ENCODE measurements at regions of chr9 and their contacts with region 1.

Region 1: DNA sequence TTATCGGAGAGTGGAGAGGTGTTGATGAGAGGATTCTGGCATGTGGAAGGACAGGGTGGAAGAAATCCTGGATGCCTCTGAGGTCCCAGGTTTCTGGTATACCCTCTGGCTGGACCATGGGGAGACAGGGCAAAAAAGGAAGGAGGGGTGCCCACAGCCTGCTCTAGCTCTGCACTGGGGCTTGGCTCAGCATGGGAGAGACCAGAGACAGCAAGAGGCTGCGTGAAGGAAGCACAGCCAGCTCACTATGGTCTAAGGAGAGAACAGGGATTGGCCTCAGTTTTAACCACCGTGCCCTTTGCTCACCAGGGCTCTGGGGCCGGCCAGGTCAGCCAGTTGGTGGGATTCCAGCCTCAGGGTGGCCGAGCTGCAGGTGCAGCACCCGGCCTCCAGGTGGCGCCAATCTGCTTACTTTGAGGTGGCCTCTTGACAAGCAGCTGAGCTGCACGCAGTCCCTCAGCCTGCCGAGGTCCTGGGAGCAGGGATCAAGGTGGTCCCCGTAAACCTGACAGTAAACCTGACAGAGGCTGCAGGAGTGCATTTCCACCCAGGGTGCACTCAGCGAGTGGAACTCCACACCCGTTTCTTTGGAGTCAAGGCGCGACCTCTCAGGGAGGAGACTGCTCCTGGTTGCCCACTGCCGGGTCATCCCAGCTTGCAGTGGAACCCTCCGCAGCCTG is 25.0 kb upstream of the SPTLC1 start:
- DNase-seq: peak; percentile 82 to 97
- H3K4me3 ChIP-seq: peak overlapping the region in 1 of 4 experiments; percentile 62; a peak in 2 of 8 replicates
- H3K27ac ChIP-seq: no peak overlapping the region
- H3K4me1 ChIP-seq: peaks cover 0 to 5% (median 4%) of the 10 kb centered on the region in 4 experiments; a peak in 4 of 7 replicates
- H3K27me3 ChIP-seq: peaks cover 3 to 26% (median 16%) of the 10 kb centered on the region in 4 experiments; a peak in 6 of 7 replicates
- CTCF ChIP-seq: peak; percentile 96 to 98 (median 98)
- EP300 ChIP-seq: no peak; a peak in 1 of 3 replicates
- POLR2A ChIP-seq: no peak
- RAD21 ChIP-seq: peak; percentile 83 to 92

Region 2: DNA sequence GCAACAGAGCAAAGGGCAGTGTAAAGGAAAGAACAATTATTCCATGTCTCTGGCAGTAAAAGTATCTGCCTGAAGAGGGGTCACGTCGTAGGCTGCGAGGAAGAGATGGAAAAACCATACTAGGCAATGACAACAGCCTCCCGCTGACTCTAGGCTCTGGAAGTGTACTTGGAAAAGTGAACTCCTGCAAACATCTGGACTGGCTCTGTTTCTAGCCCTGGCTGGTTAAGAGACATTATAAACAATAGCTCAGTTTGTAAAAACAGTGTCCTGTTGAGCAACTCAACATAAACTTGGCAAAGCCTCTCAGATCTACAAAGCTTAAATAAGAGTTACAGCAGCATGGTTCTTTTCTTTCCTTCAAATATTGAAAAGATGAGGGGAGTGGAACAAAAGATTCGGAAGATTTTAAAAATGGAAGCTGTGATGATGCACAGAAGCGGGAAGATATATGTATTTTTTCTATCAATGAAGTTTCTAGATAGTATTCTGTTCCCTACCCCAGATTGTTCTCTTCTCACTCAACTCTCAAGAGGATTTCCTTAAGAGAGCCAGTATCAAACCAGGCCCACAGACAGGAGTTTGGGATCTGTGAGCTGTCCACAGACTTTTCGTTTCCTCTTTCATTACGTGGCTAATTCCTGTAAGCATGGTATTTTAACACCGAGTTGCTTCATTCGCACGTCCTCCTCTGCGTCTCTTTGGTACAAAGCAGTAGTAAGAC is 104.4 kb before region 1 on chr9:
- CTCF ChIA-PET with region 1: no interaction called
- POLR2A ChIA-PET with region 1: no interaction called
- DNase-seq: no peak
- H3K4me3 ChIP-seq: no peak overlapping the region
- H3K27ac ChIP-seq: no peak overlapping the region
- H3K4me1 ChIP-seq: no peaks in the 10 kb centered on the region
- H3K27me3 ChIP-seq: no peaks in the 10 kb centered on the region
- CTCF ChIP-seq: no peak
- EP300 ChIP-seq: no peak
- POLR2A ChIP-seq: no peak
- RAD21 ChIP-seq: no peak

Region 3: DNA sequence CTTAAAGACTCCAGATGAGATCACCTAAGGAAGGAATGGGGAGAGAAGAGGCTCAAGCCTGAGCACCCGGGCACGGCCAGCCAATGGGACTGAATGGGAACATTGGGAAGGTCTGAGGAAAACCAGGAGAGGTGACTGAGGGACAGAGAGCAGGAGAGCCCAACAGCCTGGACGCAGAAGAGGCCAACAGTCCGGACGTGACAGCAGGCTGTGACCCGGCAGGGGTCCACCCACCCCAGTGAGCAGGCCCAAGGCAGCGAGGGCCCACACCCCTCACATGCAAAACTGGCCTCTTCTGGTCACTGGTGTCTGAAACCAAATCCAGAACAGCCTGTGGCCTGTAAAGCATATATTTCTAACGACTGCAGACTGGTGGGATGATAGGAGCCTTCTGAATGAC is 17.4 kb before region 1 on chr9:
- CTCF ChIA-PET with region 1: interaction called, 17 read pairs
- POLR2A ChIA-PET with region 1: interaction called, 3 read pairs
- DNase-seq: no peak
- H3K4me3 ChIP-seq: no peak overlapping the region
- H3K27ac ChIP-seq: no peak overlapping the region
- H3K4me1 ChIP-seq: no peaks in the 10 kb centered on the region; a peak in 1 of 7 replicates
- H3K27me3 ChIP-seq: no peaks in the 10 kb centered on the region; a peak in 2 of 7 replicates
- CTCF ChIP-seq: no peak
- EP300 ChIP-seq: no peak
- POLR2A ChIP-seq: no peak
- RAD21 ChIP-seq: no peak

Region 4: DNA sequence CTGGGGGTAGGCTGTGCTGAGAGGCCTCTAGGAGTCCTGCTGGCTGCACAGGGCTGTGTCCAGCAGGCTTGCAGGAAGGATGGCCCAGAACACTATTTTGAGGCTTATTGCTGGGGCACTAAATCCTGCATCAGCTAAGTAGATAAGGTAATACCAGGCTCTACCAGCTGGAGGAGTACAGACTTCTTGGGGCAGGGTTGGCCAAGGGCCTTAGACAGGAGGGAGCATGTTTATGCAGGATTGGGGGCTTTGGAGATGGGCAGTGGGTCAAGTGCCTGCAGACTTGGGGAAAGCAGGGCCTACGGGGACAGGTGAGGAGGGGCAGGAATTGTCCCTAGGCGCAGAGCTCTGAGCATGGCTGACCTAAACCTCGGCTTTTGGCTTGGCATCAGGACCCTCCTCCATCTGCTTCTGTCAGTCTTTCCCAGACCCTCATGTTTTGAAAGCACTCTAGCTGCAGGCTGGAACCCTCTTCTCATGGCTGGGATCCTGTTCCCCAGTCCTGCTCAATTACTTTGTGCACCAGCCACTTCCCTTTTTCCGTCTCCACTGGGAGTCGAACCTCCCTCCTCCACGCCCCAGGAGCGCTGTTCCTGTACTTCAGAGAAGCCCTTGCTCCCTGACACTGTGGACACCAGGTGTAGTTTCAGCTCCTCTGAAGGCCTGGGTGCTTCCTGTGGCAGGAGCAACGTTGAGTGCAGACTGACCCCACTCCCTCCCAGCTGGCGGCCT is 36.0 kb after region 1 on chr9:
- CTCF ChIA-PET with region 1: interaction called, 100 read pairs
- POLR2A ChIA-PET with region 1: no interaction called
- DNase-seq: no peak
- H3K4me3 ChIP-seq: no peak overlapping the region
- H3K27ac ChIP-seq: no peak overlapping the region
- H3K4me1 ChIP-seq: peaks cover 0 to 4% (median 0%) of the 10 kb centered on the region in 4 experiments; a peak in 1 of 7 replicates
- H3K27me3 ChIP-seq: no peaks in the 10 kb centered on the region
- CTCF ChIP-seq: peak; percentile 21 to 69 (median 40)
- EP300 ChIP-seq: no peak
- POLR2A ChIP-seq: no peak
- RAD21 ChIP-seq: peak; percentile 51 to 65

Region 5: GRCh38 chr9:92206488-92206887 is 66.3 kb after region 1 on chr9:
- CTCF ChIA-PET with region 1: interaction called, 40 read pairs
- POLR2A ChIA-PET with region 1: no interaction called
- DNase-seq: no peak
- H3K4me3 ChIP-seq: no peak overlapping the region
- H3K27ac ChIP-seq: no peak overlapping the region
- H3K4me1 ChIP-seq: no peaks in the 10 kb centered on the region
- H3K27me3 ChIP-seq: no peaks in the 10 kb centered on the region
- CTCF ChIP-seq: no peak
- EP300 ChIP-seq: no peak
- POLR2A ChIP-seq: no peak
- RAD21 ChIP-seq: no peak

Region 6: DNA sequence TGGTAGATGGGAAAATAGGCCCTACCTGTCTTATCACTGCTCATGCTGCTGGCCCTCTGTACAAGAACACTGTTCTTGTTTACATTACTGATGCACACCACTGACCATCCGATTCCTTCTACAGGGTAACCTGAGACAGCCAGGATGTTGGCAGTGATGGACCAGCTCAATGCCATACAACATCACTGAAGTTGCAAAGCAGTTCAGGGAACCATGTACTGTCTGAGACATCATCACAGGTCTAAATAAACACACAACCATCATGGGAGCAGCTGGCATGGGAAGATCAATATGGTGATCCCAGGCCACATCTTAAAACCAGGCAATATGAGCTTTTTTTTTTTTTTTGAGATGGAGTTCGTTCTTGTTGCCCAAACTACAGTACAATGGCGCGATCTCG is 94.3 kb after region 1 on chr9:
- CTCF ChIA-PET with region 1: interaction called, 116 read pairs
- POLR2A ChIA-PET with region 1: interaction called, 8 read pairs
- DNase-seq: no peak
- H3K4me3 ChIP-seq: no peak overlapping the region
- H3K27ac ChIP-seq: no peak overlapping the region
- H3K4me1 ChIP-seq: no peaks in the 10 kb centered on the region
- H3K27me3 ChIP-seq: no peaks in the 10 kb centered on the region
- CTCF ChIP-seq: no peak
- EP300 ChIP-seq: no peak
- POLR2A ChIP-seq: no peak
- RAD21 ChIP-seq: no peak

Region 7: DNA sequence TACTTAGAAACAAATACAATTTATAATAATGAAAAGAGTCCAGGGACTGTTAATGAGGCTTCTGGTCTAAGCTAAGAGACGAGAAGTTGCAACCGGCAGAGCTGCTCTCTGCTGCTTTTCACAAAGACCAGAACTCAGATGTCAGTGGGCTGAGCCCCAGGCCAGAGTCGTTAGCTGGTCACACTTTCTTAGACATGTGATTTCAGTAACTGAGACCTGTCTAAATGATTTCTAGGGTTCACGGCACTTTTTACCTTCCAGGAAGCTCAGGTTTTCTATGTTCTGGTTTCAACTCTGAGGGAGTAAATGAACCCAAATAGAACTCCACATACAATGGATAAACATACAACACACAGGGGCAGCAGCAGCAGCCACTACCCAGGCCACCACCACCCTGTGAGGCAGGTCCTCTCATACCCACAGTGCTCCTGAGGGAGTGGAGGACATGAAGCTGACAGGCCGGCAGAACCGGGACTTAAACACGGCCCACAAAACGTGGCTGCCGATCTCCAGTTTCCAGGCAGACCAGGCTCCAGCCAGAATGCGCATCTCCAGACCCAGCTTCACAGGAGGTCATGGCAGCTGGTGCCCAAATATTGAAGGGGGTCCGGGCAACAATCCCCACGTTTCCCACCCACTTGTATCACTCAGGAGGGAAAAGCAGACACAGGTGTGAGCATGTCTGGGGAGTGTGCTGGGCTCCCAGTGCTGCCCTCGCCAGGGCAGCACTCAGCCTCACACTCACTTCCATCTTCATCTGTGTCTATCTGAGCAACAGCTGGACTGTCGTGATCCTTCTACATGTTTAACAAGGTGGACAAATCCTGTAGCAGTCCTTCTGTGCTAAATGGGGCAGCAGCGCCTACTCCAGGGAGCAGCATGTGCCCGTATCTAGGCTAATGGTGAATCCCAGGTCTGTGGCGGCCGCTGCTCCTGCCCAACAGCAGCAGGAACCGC is 114.4 kb after region 1 on chr9:
- CTCF ChIA-PET with region 1: interaction called, 11 read pairs
- POLR2A ChIA-PET with region 1: no interaction called
- DNase-seq: no peak
- H3K4me3 ChIP-seq: no peak overlapping the region
- H3K27ac ChIP-seq: no peak overlapping the region
- H3K4me1 ChIP-seq: no peaks in the 10 kb centered on the region
- H3K27me3 ChIP-seq: no peaks in the 10 kb centered on the region
- CTCF ChIP-seq: no peak
- EP300 ChIP-seq: no peak
- POLR2A ChIP-seq: no peak
- RAD21 ChIP-seq: no peak

Measured in H1 (cell line).